ENCODE measurements at regions of chr4 and their contacts with region 1.

Region 1: GRCh38 chr4:150540959-150541360 is 41.0 kb upstream of the MAB21L2 start:
- DNase-seq: peak; percentile 9 to 79 (median 28)
- ATAC-seq: peak; percentile 74
- H3K4me3 ChIP-seq: no peak overlapping the region
- H3K27ac ChIP-seq: peak overlapping the region; percentile 71
- H3K4me1 ChIP-seq: peaks cover 13 to 34% of the 10 kb centered on the region in 2 experiments; a peak in 4 of 5 replicates
- H3K27me3 ChIP-seq: no peaks in the 10 kb centered on the region
- CTCF ChIP-seq: no peak
- EP300 ChIP-seq: peak; percentile 63; the same call in 1 of the 2 replicates
- POLR2A ChIP-seq: no peak
- RAD21 ChIP-seq: no peak

Region 2: GRCh38 chr4:150316332-150317205 is 224.4 kb before region 1 on chr4:
- CTCF ChIA-PET with region 1: no interaction called
- POLR2A ChIA-PET with region 1: no interaction called
- in situ Hi-C with region 1: no loop called
- intact Hi-C with region 1: loop called (anchors 5 kb)
- DNase-seq: peak in 1 of 4 experiments; percentile 66
- ATAC-seq: peak; percentile 75
- H3K4me3 ChIP-seq: no peak overlapping the region
- H3K27ac ChIP-seq: peak overlapping the region; percentile 91
- H3K4me1 ChIP-seq: peaks cover 5 to 59% of the 10 kb centered on the region in 2 experiments
- H3K27me3 ChIP-seq: no peaks in the 10 kb centered on the region
- CTCF ChIP-seq: no peak
- EP300 ChIP-seq: peak; percentile 98
- POLR2A ChIP-seq: no peak
- RAD21 ChIP-seq: peak in 1 of 2 experiments; percentile 15; a peak in 2 of 4 replicates

Region 3: GRCh38 chr4:150387981-150388380 is 153.0 kb before region 1 on chr4:
- CTCF ChIA-PET with region 1: no interaction called
- POLR2A ChIA-PET with region 1: no interaction called
- in situ Hi-C with region 1: no loop called
- intact Hi-C with region 1: no loop called
- DNase-seq: no peak
- ATAC-seq: 0 out of 3 replicates have a peak, but pooled peaks have one; percentile 32
- H3K4me3 ChIP-seq: no peak overlapping the region
- H3K27ac ChIP-seq: no peak overlapping the region
- H3K4me1 ChIP-seq: peaks cover 0 to 3% of the 10 kb centered on the region in 2 experiments; a peak in 1 of 5 replicates
- H3K27me3 ChIP-seq: no peaks in the 10 kb centered on the region
- CTCF ChIP-seq: no peak
- EP300 ChIP-seq: no peak
- POLR2A ChIP-seq: no peak
- RAD21 ChIP-seq: no peak

Region 4: GRCh38 chr4:150573534-150573933 is 32.6 kb after region 1 on chr4:
- CTCF ChIA-PET with region 1: no interaction called
- POLR2A ChIA-PET with region 1: interaction called, 4 read pairs
- in situ Hi-C with region 1: no loop called
- intact Hi-C with region 1: loop called (anchors 2 kb)
- DNase-seq: no peak
- ATAC-seq: peak; percentile 20
- H3K4me3 ChIP-seq: 0 out of 2 replicates have a peak overlapping the region, but pooled peaks have one; percentile 4
- H3K27ac ChIP-seq: peak overlapping the region; percentile 91
- H3K4me1 ChIP-seq: peaks cover 0 to 60% of the 10 kb centered on the region in 2 experiments; a peak in 4 of 5 replicates
- H3K27me3 ChIP-seq: no peaks in the 10 kb centered on the region
- CTCF ChIP-seq: no peak
- EP300 ChIP-seq: no peak; the same call in 1 of the 2 replicates
- POLR2A ChIP-seq: no peak
- RAD21 ChIP-seq: no peak